Motor neuron (in vitro differentiated cells): ENCODE measurements at regions of chr6 and their contacts with region 1.

Region 1: GRCh38 chr6:107674995-107675738 is 148.9 kb downstream of the SCML4 start:
- ATAC-seq: peak; percentile 72 to 97 (median 91)
- H3K4me3 ChIP-seq: no peak overlapping the region
- H3K27ac ChIP-seq: peak overlapping the region; percentile 35 to 87
- H3K4me1 ChIP-seq: peaks cover 29 to 31% of the 10 kb centered on the region in 2 donors

Region 2: GRCh38 chr6:106724848-106725247 is 950.3 kb before region 1 on chr6:
- in situ Hi-C with region 1: no loop called
- ATAC-seq: no peak
- H3K4me3 ChIP-seq: no peak overlapping the region
- H3K27ac ChIP-seq: no peak overlapping the region
- H3K4me1 ChIP-seq: peaks cover 5 to 8% of the 10 kb centered on the region in 2 donors

Region 3: GRCh38 chr6:107318100-107318736 is 356.9 kb before region 1 on chr6:
- in situ Hi-C with region 1: loop called in 1 of 9 experiments (anchors 25 kb)
- ATAC-seq: peak; percentile 53 to 98 (median 72)
- H3K4me3 ChIP-seq: no peak overlapping the region
- H3K27ac ChIP-seq: no peak overlapping the region
- H3K4me1 ChIP-seq: peaks cover 0 to 5% of the 10 kb centered on the region in 2 donors

Region 4: GRCh38 chr6:107847844-107848802 is 173.0 kb after region 1 on chr6:
- in situ Hi-C with region 1: loop called in 5 of 9 experiments (anchors 10 to 25 kb)
- ATAC-seq: peak; percentile 98 to 99 (median 98)
- H3K4me3 ChIP-seq: peak overlapping the region; percentile 16 to 39 (median 28)
- H3K27ac ChIP-seq: no peak overlapping the region
- H3K4me1 ChIP-seq: peaks cover 0 to 7% of the 10 kb centered on the region in 2 donors